AG04449 (cell line): ENCODE measurements at regions of chr11 and their contacts with region 1.

Region 1: GRCh38 chr11:57249384-57250319 is 12.6 kb upstream of the APLNR start:
- DNase-seq: no peak
- H3K4me3 ChIP-seq: no peak overlapping the region
- CTCF ChIP-seq: peak; percentile 82

Region 2: GRCh38 chr11:56841210-56841810 is 408.3 kb before region 1 on chr11:
- CTCF ChIA-PET with region 1: interaction called, 288 read pairs
- POLR2A ChIA-PET with region 1: no interaction called
- DNase-seq: peak; percentile 10
- H3K4me3 ChIP-seq: no peak overlapping the region
- CTCF ChIP-seq: peak; percentile 65

Region 3: DNA sequence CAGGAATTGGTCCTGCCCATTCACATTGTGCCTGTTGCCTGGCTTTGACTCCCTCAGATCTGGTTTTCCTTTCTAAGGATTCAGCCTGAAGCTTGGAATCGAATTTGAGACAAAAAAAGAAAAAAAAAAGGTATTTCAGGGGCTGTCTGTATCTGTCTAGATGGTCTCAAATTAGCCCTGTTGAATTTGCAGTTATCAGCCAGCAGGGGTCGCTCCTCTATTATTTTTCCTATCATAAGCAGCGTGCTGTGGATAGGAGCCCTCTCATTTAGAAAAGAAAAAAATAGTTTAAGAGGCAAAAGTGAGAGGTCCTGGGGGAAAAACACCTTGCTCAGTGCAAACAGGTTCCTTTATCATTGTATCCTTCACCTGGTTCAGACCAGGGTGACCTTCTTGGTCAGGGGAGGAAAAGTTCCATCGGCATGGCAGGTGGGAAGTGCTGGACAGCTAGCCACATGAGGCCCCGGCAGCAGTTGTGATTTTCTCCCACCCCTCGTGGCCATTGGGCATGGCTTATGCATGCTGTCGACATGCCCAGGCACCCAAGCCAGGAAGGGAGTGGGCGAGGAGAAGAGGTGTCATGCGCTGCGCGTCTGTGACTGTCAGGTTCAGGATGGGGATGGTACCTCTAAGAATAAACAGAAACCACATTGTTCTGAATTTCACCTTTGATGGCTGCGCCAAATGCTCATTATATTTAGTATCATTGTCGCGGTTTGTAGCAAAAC is 247.8 kb before region 1 on chr11:
- CTCF ChIA-PET with region 1: interaction called, 111 read pairs
- POLR2A ChIA-PET with region 1: no interaction called
- DNase-seq: no peak
- H3K4me3 ChIP-seq: no peak overlapping the region
- CTCF ChIP-seq: peak; percentile 20

Region 4: GRCh38 chr11:57103899-57104605 is 145.6 kb before region 1 on chr11:
- CTCF ChIA-PET with region 1: interaction called, 11 read pairs
- POLR2A ChIA-PET with region 1: no interaction called
- DNase-seq: no peak
- H3K4me3 ChIP-seq: no peak overlapping the region
- CTCF ChIP-seq: no peak

Region 5: DNA sequence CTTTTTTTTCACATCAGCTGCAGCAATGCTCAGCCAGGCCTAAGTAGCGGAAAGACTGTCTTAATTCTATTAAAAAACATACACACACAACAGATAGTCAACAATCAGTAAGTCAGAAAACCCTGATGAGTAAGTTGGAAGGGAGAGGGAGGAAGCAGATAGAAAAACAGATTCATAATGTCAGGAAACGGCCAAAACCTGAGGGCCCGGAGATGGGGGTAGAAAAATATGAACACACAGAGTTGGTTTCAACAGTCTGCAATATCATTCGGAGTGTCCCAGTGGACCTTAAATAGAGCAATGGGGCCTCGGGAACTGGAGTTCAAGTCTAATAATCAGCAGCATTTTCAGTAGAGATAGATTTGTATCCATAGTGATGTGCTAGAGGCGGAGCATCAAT is 53.1 kb before region 1 on chr11:
- CTCF ChIA-PET with region 1: interaction called, 124 read pairs
- POLR2A ChIA-PET with region 1: no interaction called
- DNase-seq: no peak
- H3K4me3 ChIP-seq: no peak overlapping the region
- CTCF ChIP-seq: no peak

Region 6: DNA sequence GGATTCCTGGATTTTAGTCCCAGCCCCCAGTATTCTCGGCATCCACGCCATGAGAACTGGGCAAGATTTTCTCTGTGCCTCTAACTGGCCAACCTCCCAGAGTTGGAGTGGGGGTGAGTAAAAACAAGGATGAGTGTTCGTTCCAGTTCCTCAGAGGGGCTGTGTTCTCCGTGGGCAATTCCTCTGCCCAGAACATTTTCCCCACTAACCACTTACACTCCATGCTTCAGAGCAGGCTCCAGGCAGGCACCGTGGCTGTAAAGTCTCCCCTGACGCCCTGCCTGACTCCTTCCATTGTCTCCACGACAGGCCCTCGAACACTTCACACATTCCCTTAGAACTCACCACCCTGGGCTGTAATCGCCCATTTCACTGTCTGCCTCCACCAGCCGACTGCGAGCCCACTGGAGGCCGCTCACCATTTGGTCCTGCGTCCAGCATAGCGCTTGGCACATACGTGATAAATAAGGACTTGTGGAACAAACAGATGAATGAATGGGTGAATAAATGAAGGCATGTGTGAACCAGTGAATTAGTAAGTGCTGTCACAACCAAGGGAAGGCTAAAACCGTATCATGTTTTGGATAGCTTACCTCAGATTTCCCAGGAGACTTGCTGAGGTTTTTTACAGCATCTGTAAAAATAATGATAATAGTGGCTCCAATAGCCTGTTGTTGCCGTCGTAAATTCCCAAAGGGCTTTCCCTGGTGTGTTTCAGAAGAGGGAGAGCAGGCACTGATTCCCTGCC is 18.7 kb before region 1 on chr11:
- CTCF ChIA-PET with region 1: interaction called, 85 read pairs
- POLR2A ChIA-PET with region 1: no interaction called
- DNase-seq: no peak
- H3K4me3 ChIP-seq: no peak overlapping the region
- CTCF ChIP-seq: no peak

Region 7: DNA sequence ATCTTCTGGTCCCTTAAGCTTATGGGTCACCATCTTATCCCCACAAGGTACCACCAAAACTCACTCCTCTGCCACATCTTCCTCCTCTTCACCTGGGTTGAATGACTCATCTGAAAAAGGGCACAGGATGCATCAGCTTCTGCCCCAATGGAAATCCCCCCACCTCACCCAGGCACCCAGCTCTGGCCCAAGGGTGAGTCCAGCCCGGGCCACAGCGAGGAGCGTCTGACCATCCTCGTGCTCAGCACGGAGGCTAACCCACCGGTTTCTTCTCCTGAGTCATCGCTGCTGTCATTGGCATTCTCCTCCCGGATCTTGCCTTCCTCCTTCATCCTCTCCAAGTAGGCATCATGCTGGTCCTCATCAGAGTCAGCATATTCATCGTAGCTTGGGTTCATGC is 80.4 kb after region 1 on chr11:
- CTCF ChIA-PET with region 1: no interaction called
- POLR2A ChIA-PET with region 1: no interaction called
- DNase-seq: no peak
- H3K4me3 ChIP-seq: no peak overlapping the region
- CTCF ChIP-seq: no peak